ENCODE measurements at regions of chr11 and their contacts with region 1.

Region 1: GRCh38 chr11:74929431-74930363 is 19.2 kb downstream of the XRRA1 start:
- DNase-seq: peak; percentile 84
- H3K4me3 Mint-ChIP-seq: no peak overlapping the region
- H3K27ac Mint-ChIP-seq: no peak overlapping the region
- H3K4me1 Mint-ChIP-seq: peaks cover 2% of the 10 kb centered on the region
- H3K27me3 Mint-ChIP-seq: no peaks in the 10 kb centered on the region

Region 2: GRCh38 chr11:74988541-74989260 is 59.0 kb after region 1 on chr11 and contains the start of gene NEU3:
- CTCF ChIA-PET with region 1: interaction called, 3 read pairs
- intact Hi-C with region 1: loop called (anchors 2 kb)
- DNase-seq: peak; percentile 90
- H3K4me3 Mint-ChIP-seq: peak within 1 kb of the TSS; percentile 95
- H3K27ac Mint-ChIP-seq: peak within 1 kb of the TSS; percentile 79
- H3K4me1 Mint-ChIP-seq: peaks cover 26% of the 10 kb centered on the region
- H3K27me3 Mint-ChIP-seq: no peaks in the 10 kb centered on the region
- total RNA-seq, gene NEU3: 16.4 TPM

Region 3: DNA sequence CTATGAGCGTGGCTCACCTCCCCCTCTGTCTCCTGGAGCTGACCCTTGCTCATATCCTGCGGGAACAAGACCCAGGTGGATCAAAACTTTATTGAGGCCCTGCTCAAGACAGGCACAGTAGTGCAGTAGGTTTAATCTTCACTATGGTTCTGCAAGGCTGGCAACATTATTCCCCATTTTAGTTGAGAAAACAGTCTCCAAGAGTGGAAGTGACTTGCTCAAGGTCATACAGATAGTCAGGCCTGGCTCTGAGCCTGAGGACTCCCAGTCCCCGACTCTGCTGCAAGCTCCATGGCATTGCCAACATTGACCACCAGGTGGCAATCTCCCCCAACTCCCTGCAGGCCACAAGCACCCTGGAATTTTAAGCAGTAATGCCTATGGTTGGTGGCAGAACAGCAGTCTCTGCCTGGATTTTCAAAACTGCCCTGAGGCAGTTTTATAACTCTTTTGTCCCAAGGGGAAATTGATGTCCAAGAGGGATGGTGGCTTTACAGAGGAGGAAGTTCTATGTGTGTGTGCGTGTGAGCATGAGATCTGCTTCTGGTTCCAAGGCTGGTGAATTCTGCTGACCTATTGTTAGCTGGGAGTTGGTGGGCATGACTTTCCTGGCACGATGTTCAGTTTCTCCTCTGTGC is 93.2 kb after region 1 on chr11:
- CTCF ChIA-PET with region 1: interaction called, 10 read pairs
- intact Hi-C with region 1: loop called (anchors 2 kb)
- DNase-seq: peak; percentile 87
- H3K4me3 Mint-ChIP-seq: no peak overlapping the region
- H3K27ac Mint-ChIP-seq: no peak overlapping the region
- H3K4me1 Mint-ChIP-seq: no peaks in the 10 kb centered on the region
- H3K27me3 Mint-ChIP-seq: no peaks in the 10 kb centered on the region

Region 4: DNA sequence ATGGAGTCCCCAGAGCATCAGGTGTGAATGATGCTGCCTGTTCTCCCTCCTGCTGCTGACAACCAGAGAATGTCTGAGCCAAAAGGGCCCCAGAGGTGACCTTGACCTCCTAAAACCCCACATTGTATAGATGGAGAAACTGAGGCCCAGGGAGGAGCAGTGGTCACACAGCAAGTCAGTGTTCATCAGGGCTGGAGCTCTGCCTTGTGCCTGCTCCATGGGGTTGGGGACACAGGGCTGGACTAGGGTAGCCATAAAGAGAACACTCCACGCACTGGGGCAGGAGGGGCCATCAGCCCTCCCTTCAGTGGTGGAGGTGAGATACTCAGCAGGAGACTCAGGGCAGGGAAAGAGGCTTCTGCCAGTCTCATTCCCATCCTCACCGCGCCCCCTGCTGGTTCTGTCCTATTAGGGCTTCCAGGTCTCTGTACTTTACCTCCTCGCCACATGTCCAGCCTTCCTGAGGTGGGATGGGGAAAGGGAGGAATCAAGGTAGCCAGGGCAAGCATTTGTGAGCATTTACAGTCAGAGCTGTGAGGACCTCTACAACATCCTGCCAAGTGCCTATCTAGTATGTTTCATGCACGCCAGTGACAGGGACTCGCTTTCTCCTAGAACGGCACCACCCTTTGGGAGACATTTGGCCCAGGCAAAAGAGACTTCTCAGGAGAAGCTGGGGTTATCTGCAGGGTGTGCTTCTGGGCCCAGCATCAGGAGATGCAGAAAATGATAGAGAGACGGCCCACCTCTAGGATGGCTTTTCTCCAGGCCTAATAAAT is 102.3 kb after region 1 on chr11:
- CTCF ChIA-PET with region 1: interaction called, 19 read pairs
- intact Hi-C with region 1: loop called (anchors 1 kb)
- DNase-seq: peak; percentile 79
- H3K4me3 Mint-ChIP-seq: no peak overlapping the region
- H3K27ac Mint-ChIP-seq: no peak overlapping the region
- H3K4me1 Mint-ChIP-seq: no peaks in the 10 kb centered on the region
- H3K27me3 Mint-ChIP-seq: no peaks in the 10 kb centered on the region

Region 5: GRCh38 chr11:75204685-75205563 is 275.2 kb after region 1 on chr11:
- CTCF ChIA-PET with region 1: interaction called, 10 read pairs
- intact Hi-C with region 1: loop called (anchors 1 kb)
- DNase-seq: peak; percentile 93
- H3K4me3 Mint-ChIP-seq: no peak overlapping the region
- H3K27ac Mint-ChIP-seq: no peak overlapping the region
- H3K4me1 Mint-ChIP-seq: no peaks in the 10 kb centered on the region
- H3K27me3 Mint-ChIP-seq: no peaks in the 10 kb centered on the region

Region 6: GRCh38 chr11:75241036-75241905 is 311.6 kb after region 1 on chr11:
- CTCF ChIA-PET with region 1: interaction called, 5 read pairs
- intact Hi-C with region 1: loop called (anchors 2 kb)
- DNase-seq: peak; percentile 86
- H3K4me3 Mint-ChIP-seq: peak overlapping the region; percentile 63
- H3K27ac Mint-ChIP-seq: no peak overlapping the region
- H3K4me1 Mint-ChIP-seq: peaks cover 10% of the 10 kb centered on the region
- H3K27me3 Mint-ChIP-seq: peaks cover 33% of the 10 kb centered on the region